Tibial artery (tissue), 4 donors: ENCODE measurements at regions of chr1 and their contacts with region 1.

Region 1: GRCh38 chr1:95043141-95043980 is 29.4 kb downstream of the ALG14 start:
- DNase-seq: peak; percentile 88 to 90
- H3K4me3 ChIP-seq: no peak overlapping the region
- H3K27ac ChIP-seq: peak overlapping the region in 1 of 2 donors; percentile 70
- H3K4me1 ChIP-seq: peaks cover 0 to 20% (median 10%) of the 10 kb centered on the region in 4 donors
- H3K27me3 ChIP-seq: no peaks in the 10 kb centered on the region
- CTCF ChIP-seq: peak; percentile 98 to 99

Region 2: GRCh38 chr1:94854458-94855306 is 188.7 kb before region 1 on chr1:
- intact Hi-C with region 1: loop called (anchors 2 kb)
- DNase-seq: peak; percentile 92
- H3K4me3 ChIP-seq: peak overlapping the region; percentile 46 to 50
- H3K27ac ChIP-seq: peak overlapping the region; percentile 68 to 79
- H3K4me1 ChIP-seq: peaks cover 0 to 31% (median 18%) of the 10 kb centered on the region in 4 donors
- H3K27me3 ChIP-seq: no peaks in the 10 kb centered on the region
- CTCF ChIP-seq: peak; percentile 92 to 97

Region 3: DNA sequence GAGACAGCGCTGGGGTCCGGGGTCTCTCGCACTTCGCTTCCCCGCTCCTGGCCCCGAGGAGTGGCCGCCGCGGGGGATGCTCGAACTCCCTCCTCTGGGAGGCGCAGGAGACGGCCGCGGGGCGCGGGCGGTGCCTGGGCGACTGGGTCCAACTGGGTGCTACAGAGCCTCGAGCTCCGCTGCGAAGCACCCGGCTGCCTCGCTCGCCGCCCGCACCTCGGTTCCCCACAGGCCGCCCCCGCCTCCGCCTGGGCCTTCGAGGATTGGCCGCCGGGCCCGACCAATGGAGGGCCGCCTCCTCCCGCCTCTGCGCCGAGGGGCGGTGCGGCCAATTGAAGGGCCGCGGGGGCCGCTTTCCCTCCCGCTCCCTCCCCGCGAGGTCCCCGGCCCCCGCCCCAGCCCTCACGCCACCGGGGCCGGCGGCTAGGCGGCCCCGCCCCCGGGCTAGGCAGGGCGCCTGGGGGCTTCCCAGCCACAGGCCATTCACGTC is 116.4 kb before region 1 on chr1 and contains the start of gene CNN3:
- intact Hi-C with region 1: no loop called
- DNase-seq: peak; percentile 90 to 97
- H3K4me3 ChIP-seq: peak within 1 kb of the TSS; percentile 86 to 93
- H3K27ac ChIP-seq: peak within 1 kb of the TSS; percentile 99
- H3K4me1 ChIP-seq: peaks cover 0 to 59% (median 39%) of the 10 kb centered on the region in 4 donors
- H3K27me3 ChIP-seq: no peaks in the 10 kb centered on the region
- CTCF ChIP-seq: no peak

Region 4: DNA sequence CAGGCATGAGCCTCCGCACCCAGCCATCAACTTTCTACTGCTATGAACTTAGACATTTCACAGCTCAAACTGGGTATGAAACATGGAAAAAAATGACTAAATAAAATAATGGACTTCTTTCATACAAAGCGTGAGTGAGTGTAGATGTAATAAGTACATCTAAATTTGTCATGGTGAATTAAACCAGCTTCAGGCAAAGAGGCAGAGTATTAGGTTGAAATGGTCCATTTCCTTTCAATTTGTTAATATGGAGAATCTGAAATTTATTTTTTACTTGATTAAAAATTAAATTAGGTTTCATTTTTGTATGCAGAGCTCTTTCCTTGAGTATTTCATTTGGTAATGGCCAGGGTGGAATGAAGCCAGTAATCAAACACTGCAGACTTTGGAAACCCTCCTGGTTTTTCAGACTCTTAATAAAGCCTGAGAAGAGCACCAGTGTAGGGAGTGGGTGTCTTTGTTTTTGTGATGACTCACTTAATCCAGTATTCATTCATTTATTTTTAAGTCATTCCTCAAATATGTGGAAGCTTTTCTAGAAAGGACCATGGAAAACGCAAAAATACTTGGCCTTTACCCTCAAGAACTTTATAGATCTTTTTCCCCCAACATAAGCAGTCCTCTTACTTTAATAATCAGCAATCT is 19.8 kb before region 1 on chr1:
- intact Hi-C with region 1: loop called (anchors 2 kb)
- DNase-seq: no peak
- H3K4me3 ChIP-seq: no peak overlapping the region
- H3K27ac ChIP-seq: peak overlapping the region; percentile 72 to 76
- H3K4me1 ChIP-seq: peaks cover 0 to 48% (median 14%) of the 10 kb centered on the region in 4 donors
- H3K27me3 ChIP-seq: no peaks in the 10 kb centered on the region
- CTCF ChIP-seq: no peak